ENCODE measurements at regions of chr13 and their contacts with region 1.

Region 1: GRCh38 chr13:99501184-99501847 is at the start of gene TM9SF2:
- DNase-seq: peak; percentile 98 to 99 (median 98)
- ATAC-seq: peak; percentile 83
- H3K4me3 ChIP-seq: peak within 1 kb of the TSS; percentile 52
- H3K4me1 ChIP-seq: peaks cover 52% of the 10 kb centered on the region
- CTCF ChIP-seq: no peak
- total RNA-seq, gene TM9SF2: 129 to 202 (median 200) TPM

Region 2: DNA sequence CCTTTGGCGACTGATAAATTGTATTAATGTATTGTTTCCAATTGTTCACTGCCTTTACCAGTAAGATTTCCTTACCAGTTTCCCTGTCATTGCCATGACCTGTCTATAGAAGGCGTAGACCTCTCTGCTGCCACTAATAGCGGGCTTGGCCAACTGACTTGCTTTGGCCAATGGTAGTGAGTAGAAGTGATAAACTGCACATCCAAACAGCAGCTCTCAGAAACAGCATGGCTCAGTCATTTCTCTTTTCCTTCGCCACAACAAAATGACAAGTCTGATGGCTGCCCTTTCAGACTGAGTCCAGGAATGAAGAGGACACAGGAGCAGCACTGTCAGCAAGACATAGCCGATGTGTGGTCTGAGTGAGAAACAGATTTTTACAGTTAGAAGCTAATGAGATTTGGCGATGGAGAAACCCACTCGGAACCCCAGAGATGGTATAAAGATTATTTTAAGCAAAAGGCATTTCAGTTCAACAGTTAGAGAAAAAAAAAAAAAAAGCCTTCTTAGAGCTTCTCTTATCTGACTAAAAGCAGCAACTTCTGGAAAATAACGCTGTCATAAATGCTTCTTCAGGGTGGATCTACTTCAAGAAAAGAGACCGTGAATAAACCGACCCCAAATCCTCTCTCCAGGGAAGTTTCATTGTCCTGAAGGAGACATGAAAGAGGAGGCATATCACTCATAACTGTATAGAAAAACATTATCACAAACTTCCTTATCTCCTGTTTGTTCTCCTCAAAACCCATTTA is 42.0 kb before region 1 on chr13:
- intact Hi-C with region 1: loop called in 1 of 2 experiments (anchors 10 kb)
- DNase-seq: no peak
- ATAC-seq: no peak
- H3K4me3 ChIP-seq: no peak overlapping the region
- H3K4me1 ChIP-seq: no peaks in the 10 kb centered on the region
- CTCF ChIP-seq: no peak

Region 3: GRCh38 chr13:99542788-99543406 is 41.6 kb after region 1 on chr13:
- intact Hi-C with region 1: no loop called
- DNase-seq: no peak
- ATAC-seq: peak; percentile 88
- H3K4me3 ChIP-seq: no peak overlapping the region
- H3K4me1 ChIP-seq: no peaks in the 10 kb centered on the region
- CTCF ChIP-seq: no peak